ENCODE measurements at regions of chr14 and their contacts with region 1.

Region 1: GRCh38 chr14:68757618-68758081 is 35.2 kb downstream of the ZFP36L1 start:
- DNase-seq: peak; percentile 75
- H3K4me3 ChIP-seq: no peak overlapping the region
- H3K27ac ChIP-seq: no peak overlapping the region
- H3K4me1 ChIP-seq: peaks cover 0 to 31% (median 11%) of the 10 kb centered on the region in 4 donors
- H3K27me3 ChIP-seq: no peaks in the 10 kb centered on the region
- CTCF ChIP-seq: no peak
- EP300 ChIP-seq: no peak
- POLR2A ChIP-seq: no peak

Region 2: DNA sequence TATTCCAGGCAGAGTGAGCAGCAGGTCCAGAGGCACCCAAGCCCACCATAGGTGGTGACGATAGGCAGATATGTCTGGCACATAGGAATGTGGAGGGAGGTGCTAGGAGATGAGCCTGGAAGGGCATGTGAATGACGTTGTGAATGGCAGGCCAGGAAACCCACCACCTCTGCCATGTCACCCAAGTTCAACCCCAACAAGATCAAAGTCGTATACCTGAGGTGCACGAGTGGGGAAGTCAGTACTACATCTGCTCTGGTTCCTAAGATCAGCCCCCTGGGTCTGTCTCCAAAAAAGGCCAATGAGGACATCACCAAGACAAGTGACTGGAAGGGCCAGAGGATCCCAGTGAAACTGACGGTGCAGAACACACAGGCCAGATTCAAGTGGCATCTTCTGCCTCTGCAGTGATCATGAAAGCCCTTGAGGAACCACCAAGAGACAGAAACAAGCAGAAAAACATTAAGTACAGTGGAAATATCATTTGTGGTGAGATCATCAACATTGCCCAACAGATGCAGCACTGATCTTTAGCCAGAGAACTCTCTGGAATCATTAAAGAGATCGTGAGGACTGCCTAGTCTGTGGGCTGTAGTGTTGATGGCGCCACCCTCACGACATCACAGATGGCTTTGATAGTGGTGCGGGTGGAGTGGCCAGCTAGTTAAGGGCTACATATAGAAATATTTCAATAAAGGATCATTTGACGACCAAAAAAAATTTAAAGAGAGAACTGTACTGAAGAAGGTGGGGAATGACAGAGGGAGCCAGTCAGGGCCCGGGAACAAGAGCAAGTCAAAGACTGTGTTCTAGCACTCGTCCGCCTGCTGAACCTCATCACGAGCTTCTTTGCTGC is 64.5 kb before region 1 on chr14:
- intact Hi-C with region 1: loop called (anchors 5 kb)
- DNase-seq: peak; percentile 64
- H3K4me3 ChIP-seq: no peak overlapping the region
- H3K27ac ChIP-seq: peak overlapping the region in 2 of 4 donors; percentile 1 to 29
- H3K4me1 ChIP-seq: peaks cover 0 to 26% (median 18%) of the 10 kb centered on the region in 4 donors
- H3K27me3 ChIP-seq: no peaks in the 10 kb centered on the region
- CTCF ChIP-seq: no peak
- EP300 ChIP-seq: no peak
- POLR2A ChIP-seq: no peak